Natural killer cell (primary cell): ENCODE measurements at regions of chr11 and their contacts with region 1.

Region 1: GRCh38 chr11:111230122-111230465 is 15.4 kb upstream of the POU2AF2 start:
- DNase-seq: no peak
- ATAC-seq: peak in 2 of 3 donors; percentile 35 to 44
- H3K4me3 ChIP-seq: no peak overlapping the region
- H3K4me3 Mint-ChIP-seq: no peak overlapping the region
- H3K27ac ChIP-seq: no peak overlapping the region
- H3K27ac Mint-ChIP-seq: peak overlapping the region in 1 of 2 donors; percentile 11
- H3K4me1 ChIP-seq: peaks cover 8% of the 10 kb centered on the region
- H3K4me1 Mint-ChIP-seq: peaks cover 7 to 16% of the 10 kb centered on the region in 2 donors
- H3K27me3 ChIP-seq: no peaks in the 10 kb centered on the region
- H3K27me3 Mint-ChIP-seq: peaks cover 11 to 13% of the 10 kb centered on the region in 2 donors
- CTCF ChIP-seq: no peak

Region 2: DNA sequence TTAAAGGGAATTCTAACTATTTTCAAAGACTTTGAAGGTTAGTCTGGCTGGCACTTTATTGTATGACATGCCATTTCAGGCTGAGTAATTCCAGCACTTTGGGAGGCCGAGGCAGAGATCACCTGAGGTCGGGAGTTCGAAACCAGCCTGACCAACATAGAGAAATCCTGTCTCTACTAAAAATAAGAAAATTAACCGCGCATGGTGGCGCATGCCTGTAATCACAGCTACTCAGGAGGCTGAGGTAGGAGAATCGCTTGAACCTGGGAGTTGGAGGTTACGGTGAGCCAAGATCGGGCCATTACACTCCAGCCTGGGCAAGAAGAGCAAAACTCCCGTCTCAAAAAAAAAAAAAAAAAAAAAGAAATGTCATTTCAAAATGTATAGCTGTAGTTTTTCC is 1029.3 kb before region 1 on chr11:
- intact Hi-C with region 1: loop called (anchors 1 kb)
- DNase-seq: no peak
- ATAC-seq: no peak
- H3K4me3 ChIP-seq: no peak overlapping the region
- H3K4me3 Mint-ChIP-seq: no peak overlapping the region
- H3K27ac ChIP-seq: no peak overlapping the region
- H3K27ac Mint-ChIP-seq: no peak overlapping the region
- H3K4me1 ChIP-seq: no peaks in the 10 kb centered on the region
- H3K4me1 Mint-ChIP-seq: no peaks in the 10 kb centered on the region
- H3K27me3 ChIP-seq: no peaks in the 10 kb centered on the region
- H3K27me3 Mint-ChIP-seq: peaks cover 0 to 5% of the 10 kb centered on the region in 2 donors
- CTCF ChIP-seq: no peak

Region 3: GRCh38 chr11:110434952-110435779 is 794.9 kb before region 1 on chr11:
- intact Hi-C with region 1: loop called (anchors 5 kb)
- DNase-seq: peak in 1 of 2 donors; percentile 58
- ATAC-seq: no peak
- H3K4me3 ChIP-seq: no peak overlapping the region
- H3K4me3 Mint-ChIP-seq: no peak overlapping the region
- H3K27ac ChIP-seq: no peak overlapping the region
- H3K27ac Mint-ChIP-seq: no peak overlapping the region
- H3K4me1 ChIP-seq: peaks cover 11% of the 10 kb centered on the region
- H3K4me1 Mint-ChIP-seq: peaks cover 46 to 51% of the 10 kb centered on the region in 2 donors
- H3K27me3 ChIP-seq: no peaks in the 10 kb centered on the region
- H3K27me3 Mint-ChIP-seq: no peaks in the 10 kb centered on the region
- CTCF ChIP-seq: no peak

Region 4: GRCh38 chr11:111540114-111540936 is 310.2 kb after region 1 on chr11 and contains the start of gene LAYN:
- intact Hi-C with region 1: no loop called
- DNase-seq: peak; percentile 47 to 57
- ATAC-seq: peak; percentile 58 to 79 (median 68)
- H3K4me3 ChIP-seq: peak within 1 kb of the TSS; percentile 20
- H3K4me3 Mint-ChIP-seq: peak within 1 kb of the TSS; percentile 88
- H3K27ac ChIP-seq: no peak within 1 kb of the TSS
- H3K27ac Mint-ChIP-seq: peak within 1 kb of the TSS in 1 of 2 donors; percentile 64
- H3K4me1 ChIP-seq: peaks cover 34% of the 10 kb centered on the region
- H3K4me1 Mint-ChIP-seq: peaks cover 24 to 30% of the 10 kb centered on the region in 2 donors
- H3K27me3 ChIP-seq: peaks cover 24% of the 10 kb centered on the region
- H3K27me3 Mint-ChIP-seq: peaks cover 50 to 88% of the 10 kb centered on the region in 2 donors
- CTCF ChIP-seq: no peak
- total RNA-seq, gene LAYN: 0.94 to 1.8 TPM in 2 of 3 donors, not detected in the other